Naive thymus-derived CD4-positive, alpha-beta T cell (primary cell): ENCODE measurements at regions of chr9 and their contacts with region 1.

Region 1: DNA sequence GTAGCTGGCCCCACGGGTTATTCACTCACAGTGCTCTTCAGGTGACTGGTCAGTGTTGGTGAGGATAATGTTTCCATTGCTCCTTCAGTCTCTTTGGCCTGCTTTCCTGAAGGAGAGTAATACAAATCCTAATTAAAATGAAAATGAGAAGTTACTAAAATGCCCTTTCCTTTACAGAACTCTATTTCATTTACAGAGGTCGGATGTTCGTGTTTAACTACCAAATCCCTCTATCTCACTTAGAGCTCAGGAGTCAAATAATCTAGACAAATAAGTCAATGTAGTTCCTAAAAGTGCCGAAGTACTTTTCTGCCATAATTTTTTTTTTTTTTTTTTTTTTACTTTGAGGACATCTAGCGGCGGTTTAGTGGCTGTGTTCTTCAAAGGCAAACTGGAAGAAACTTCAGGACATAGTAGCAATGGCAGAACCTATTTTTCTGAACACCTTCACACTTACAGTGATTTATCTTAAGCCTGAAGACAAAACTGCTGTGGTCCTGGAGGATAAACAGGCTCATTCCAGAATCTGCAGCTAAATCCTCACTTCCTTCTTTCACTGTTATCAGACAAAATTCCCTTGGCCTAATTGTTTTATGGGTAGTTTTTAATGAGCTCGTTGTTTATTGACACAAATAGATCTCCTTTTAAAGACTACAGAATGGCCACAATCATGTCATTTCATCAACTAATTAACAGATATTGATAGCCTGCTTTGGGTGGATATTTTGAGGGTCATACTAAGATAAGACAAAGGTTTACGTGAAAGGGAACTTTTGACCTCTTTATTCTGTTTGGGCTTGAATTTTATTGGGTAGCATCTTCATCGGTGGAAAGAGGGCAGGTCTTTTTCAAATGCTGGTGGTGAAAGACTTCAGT is 207.6 kb upstream of the DMRTA1 start:
- DNase-seq: peak in 1 of 9 donors; percentile 14
- ATAC-seq: no peak
- H3K4me3 ChIP-seq: no peak overlapping the region
- H3K4me3 Mint-ChIP-seq: peak overlapping the region in 1 of 10 donors; percentile 26
- H3K27ac ChIP-seq: no peak overlapping the region
- H3K27ac Mint-ChIP-seq: no peak overlapping the region
- H3K4me1 ChIP-seq: no peaks in the 10 kb centered on the region
- H3K4me1 Mint-ChIP-seq: peaks cover 0 to 35% (median 21%) of the 10 kb centered on the region in 7 donors
- H3K27me3 ChIP-seq: no peaks in the 10 kb centered on the region
- H3K27me3 Mint-ChIP-seq: peaks cover 0 to 55% (median 0%) of the 10 kb centered on the region in 5 donors

Region 2: DNA sequence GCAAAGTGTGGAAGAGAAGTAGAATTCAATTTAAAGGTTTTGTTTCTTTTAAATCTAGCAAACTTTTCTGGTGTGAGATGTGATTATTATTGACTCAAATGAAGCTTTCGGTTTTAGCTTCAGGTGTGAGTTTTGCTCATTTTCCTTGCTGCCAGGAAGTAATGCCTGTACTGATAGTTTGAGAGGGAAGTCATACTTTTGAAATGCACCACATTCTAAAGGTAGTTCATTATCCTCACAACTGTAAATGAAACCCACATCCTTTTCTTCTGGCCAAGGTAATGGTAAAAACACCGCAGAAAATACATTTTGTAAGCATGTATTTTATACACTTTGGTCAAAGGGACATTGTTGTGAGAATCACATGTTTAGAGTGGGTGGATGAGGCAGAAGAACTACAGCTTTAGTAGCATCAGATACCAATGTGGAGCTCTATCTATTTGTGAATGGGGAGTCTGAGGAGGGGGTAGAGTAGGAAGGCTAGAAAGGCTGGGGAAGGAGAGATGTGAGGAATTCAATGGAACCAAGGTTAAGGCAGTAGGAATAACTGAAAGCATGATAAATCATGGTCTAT is 63.0 kb before region 1 on chr9:
- CTCF ChIA-PET with region 1: no interaction called
- POLR2A ChIA-PET with region 1: no interaction called
- intact Hi-C with region 1: loop called in 1 of 2 experiments (anchors 5 kb)
- DNase-seq: no peak
- ATAC-seq: no peak
- H3K4me3 ChIP-seq: no peak overlapping the region
- H3K4me3 Mint-ChIP-seq: peak overlapping the region in 1 of 10 donors; percentile 16
- H3K27ac ChIP-seq: no peak overlapping the region
- H3K27ac Mint-ChIP-seq: peak overlapping the region in 2 of 9 donors; percentile 7 to 29
- H3K4me1 ChIP-seq: no peaks in the 10 kb centered on the region
- H3K4me1 Mint-ChIP-seq: peaks cover 0 to 14% (median 8%) of the 10 kb centered on the region in 7 donors
- H3K27me3 ChIP-seq: no peaks in the 10 kb centered on the region
- H3K27me3 Mint-ChIP-seq: peaks cover 8 to 23% (median 12%) of the 10 kb centered on the region in 5 donors